MCF 10A (cell line): ENCODE measurements at regions of chr1 and their contacts with region 1.

Region 1: DNA sequence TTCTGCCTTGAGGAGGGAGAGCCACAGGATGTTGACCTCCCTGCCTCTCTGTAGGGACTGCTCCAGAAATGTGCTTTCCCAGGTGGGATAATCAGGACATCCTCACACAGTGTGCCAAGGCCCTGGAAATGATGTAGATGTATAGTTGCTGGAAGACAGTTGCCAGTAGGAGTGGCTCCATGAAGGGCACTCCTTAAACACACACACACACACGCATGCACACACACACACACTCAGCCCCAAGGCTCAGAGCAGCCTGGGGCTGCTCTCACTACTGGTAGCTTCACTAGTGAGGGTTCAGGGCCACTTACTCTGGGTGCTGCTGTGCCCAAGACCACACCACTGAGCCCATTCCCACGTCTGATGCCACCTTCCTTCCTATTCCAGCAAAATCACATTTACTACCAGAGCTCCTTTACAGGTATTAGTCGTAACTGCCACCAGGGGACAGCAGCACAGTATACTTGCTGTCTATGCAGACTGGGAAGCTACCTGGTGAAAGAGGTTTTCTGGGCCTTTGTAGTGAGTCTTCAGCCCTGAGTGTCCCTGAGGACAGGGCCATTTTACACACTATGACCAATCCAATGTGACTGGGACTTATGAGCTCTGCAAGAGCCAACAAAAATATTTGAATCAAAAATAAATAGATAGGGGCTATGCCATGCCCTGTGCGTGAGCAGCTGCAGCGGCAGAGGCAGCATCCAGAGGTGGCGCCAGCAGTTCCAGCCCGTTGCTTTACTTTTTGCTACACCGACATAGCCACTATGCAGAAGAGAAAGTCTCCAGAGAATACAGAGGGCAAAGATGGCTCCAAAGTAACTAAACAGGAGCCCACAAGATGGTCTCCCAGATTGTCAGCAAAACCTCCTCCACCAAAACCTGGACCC is 15.0 kb downstream of the CRNN start:
- DNase-seq: peak; percentile 73
- H3K4me3 Mint-ChIP-seq: no peak overlapping the region
- H3K27ac Mint-ChIP-seq: no peak overlapping the region
- H3K4me1 Mint-ChIP-seq: peaks cover 6% of the 10 kb centered on the region
- H3K27me3 Mint-ChIP-seq: peaks cover 86% of the 10 kb centered on the region
- CTCF ChIP-seq: peak; percentile 74

Region 2: DNA sequence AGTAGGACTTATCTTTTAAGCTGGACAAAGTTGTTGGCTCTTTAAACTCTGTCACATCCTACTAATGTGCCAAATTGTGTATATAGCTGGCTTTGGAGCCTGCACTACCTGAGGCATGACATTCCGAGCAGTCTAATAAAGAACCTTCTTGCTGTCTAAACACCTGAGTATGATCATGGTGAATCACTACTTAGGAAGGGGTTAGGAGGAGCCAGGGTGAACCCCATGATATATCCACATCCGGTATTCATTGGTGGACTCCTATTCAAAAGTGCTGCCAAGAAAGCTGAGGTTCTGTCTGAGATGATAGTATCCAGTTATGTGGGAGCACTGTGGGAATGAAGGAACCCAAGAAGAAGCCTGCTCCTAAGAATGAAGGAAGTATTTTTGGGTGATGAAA is 12.1 kb before region 1 on chr1:
- CTCF ChIA-PET with region 1: interaction called, 16 read pairs
- POLR2A ChIA-PET with region 1: interaction called, 3 read pairs
- intact Hi-C with region 1: no loop called
- DNase-seq: peak; percentile 26
- H3K4me3 Mint-ChIP-seq: no peak overlapping the region
- H3K27ac Mint-ChIP-seq: no peak overlapping the region
- H3K4me1 Mint-ChIP-seq: peaks cover 20% of the 10 kb centered on the region
- H3K27me3 Mint-ChIP-seq: peaks cover 89% of the 10 kb centered on the region
- CTCF ChIP-seq: no peak

Region 3: DNA sequence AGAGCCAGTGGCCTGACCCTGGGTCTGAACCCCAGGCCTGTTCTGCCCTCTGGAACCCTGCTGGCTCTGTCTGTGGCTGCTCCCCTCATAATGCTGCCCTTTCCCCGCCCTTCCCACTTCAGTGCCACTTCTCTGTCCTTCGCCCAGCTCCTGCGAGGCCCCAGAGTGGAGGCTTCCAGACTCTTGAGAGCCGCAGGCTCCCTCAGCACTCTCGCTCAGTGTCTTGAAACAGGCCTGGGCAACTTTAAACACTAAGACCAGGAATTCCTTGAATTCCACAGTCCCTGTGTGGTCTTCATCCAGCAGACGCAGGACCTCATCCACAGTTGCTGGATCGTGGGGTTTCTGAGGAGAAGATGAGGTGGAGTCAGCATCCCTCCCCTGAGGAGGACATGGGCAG is 11.5 kb after region 1 on chr1:
- CTCF ChIA-PET with region 1: interaction called, 12 read pairs
- POLR2A ChIA-PET with region 1: no interaction called
- intact Hi-C with region 1: no loop called
- DNase-seq: no peak
- H3K4me3 Mint-ChIP-seq: no peak overlapping the region
- H3K27ac Mint-ChIP-seq: no peak overlapping the region
- H3K4me1 Mint-ChIP-seq: no peaks in the 10 kb centered on the region
- H3K27me3 Mint-ChIP-seq: peaks cover 57% of the 10 kb centered on the region
- CTCF ChIP-seq: no peak

Region 4: GRCh38 chr1:152426731-152427130 is 27.7 kb after region 1 on chr1:
- CTCF ChIA-PET with region 1: interaction called, 19 read pairs
- POLR2A ChIA-PET with region 1: interaction called, 4 read pairs
- intact Hi-C with region 1: no loop called
- DNase-seq: peak; percentile 25
- H3K4me3 Mint-ChIP-seq: no peak overlapping the region
- H3K27ac Mint-ChIP-seq: no peak overlapping the region
- H3K4me1 Mint-ChIP-seq: peaks cover 6% of the 10 kb centered on the region
- H3K27me3 Mint-ChIP-seq: peaks cover 13% of the 10 kb centered on the region
- CTCF ChIP-seq: no peak

Region 5: GRCh38 chr1:152577168-152577567 is 178.1 kb after region 1 on chr1:
- CTCF ChIA-PET with region 1: no interaction called
- POLR2A ChIA-PET with region 1: no interaction called
- intact Hi-C with region 1: no loop called
- DNase-seq: no peak
- H3K4me3 Mint-ChIP-seq: no peak overlapping the region
- H3K27ac Mint-ChIP-seq: no peak overlapping the region
- H3K4me1 Mint-ChIP-seq: peaks cover 12% of the 10 kb centered on the region
- H3K27me3 Mint-ChIP-seq: no peaks in the 10 kb centered on the region
- CTCF ChIP-seq: no peak